Colonic mucosa (tissue), 4 donors: ENCODE measurements at regions of chr11 and their contacts with region 1.

Region 1: DNA sequence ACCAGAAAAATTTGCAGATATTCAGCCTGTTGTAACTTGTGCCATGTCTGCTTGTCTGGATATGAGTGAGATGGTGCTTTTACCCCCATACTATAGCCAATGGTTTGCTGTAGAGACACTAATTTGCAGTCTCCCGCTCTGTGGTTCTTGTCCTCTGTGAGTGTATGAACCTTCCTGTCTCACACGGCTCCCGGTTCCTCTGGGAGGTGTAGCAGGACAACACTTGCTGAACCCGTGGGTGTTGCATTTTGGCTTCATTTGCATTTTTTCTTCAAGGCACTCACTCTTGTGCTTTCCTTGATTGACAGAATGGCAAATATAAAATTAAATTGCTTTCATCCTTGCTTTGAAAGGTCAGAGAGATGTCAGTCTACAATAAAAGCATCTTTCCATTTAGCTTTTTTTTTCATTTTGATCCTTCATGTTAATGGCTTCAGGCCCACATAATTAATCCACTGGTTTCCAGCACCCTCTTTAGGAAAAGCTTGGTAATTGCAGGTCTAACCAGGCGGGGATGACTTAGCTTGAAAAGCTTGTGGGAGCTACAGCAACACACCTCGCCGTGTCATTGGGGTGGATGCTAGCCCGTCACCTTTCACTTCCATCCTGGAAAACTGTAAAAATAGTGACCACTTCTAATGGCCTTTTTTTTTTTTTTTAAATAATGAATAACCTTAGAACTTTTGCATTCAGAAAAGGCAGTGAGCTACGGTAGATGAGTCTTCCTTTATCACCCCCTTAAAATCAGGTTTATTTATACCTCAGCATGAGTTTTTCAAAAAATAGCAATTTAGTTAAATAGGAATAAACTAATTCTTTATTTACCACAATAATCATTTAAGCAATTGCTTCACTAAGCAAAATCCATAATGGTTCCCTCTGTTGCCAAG is 27.4 kb upstream of the ST14 start:
- DNase-seq: peak; percentile 63
- H3K4me3 ChIP-seq: no peak overlapping the region
- H3K27ac ChIP-seq: no peak overlapping the region
- H3K4me1 ChIP-seq: no peaks in the 10 kb centered on the region
- H3K27me3 ChIP-seq: no peaks in the 10 kb centered on the region
- CTCF ChIP-seq: peak; percentile 89

Region 2: DNA sequence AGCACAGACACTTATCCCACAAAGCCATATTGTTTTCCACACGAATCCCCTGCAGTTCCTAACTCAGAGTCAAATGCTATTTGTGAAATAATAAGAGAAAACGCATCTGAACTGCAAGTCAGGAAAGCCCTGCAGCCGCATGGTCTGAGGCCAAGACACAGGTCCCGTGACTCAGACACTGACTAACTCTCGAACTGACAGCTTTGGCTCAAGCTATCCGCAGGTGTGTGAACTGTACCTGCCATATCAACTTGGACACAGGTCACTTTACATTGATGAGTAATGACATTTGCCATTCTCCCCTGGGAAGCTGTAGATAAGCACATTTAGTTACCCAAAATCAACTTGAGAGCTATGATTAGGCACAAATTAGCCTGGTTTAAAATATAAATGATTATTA is 201.9 kb before region 1 on chr11:
- intact Hi-C with region 1: loop called (anchors 2 kb)
- DNase-seq: no peak
- H3K4me3 ChIP-seq: no peak overlapping the region
- H3K27ac ChIP-seq: no peak overlapping the region
- H3K4me1 ChIP-seq: no peaks in the 10 kb centered on the region
- H3K27me3 ChIP-seq: no peaks in the 10 kb centered on the region
- CTCF ChIP-seq: no peak

Region 3: GRCh38 chr11:129943036-129943435 is 189.2 kb before region 1 on chr11:
- intact Hi-C with region 1: no loop called
- DNase-seq: no peak
- H3K4me3 ChIP-seq: no peak overlapping the region
- H3K27ac ChIP-seq: no peak overlapping the region
- H3K4me1 ChIP-seq: no peaks in the 10 kb centered on the region
- H3K27me3 ChIP-seq: no peaks in the 10 kb centered on the region
- CTCF ChIP-seq: no peak

Region 4: GRCh38 chr11:129992161-129992944 is 139.9 kb before region 1 on chr11:
- intact Hi-C with region 1: loop called (anchors 10 kb)
- DNase-seq: peak; percentile 64
- H3K4me3 ChIP-seq: no peak overlapping the region
- H3K27ac ChIP-seq: no peak overlapping the region
- H3K4me1 ChIP-seq: no peaks in the 10 kb centered on the region
- H3K27me3 ChIP-seq: no peaks in the 10 kb centered on the region
- CTCF ChIP-seq: peak; percentile 19